Activated CD4-positive, alpha-beta T cell treated with anti-CD3 and anti-CD28 coated beads for 36 hours (primary cell): ENCODE measurements at regions of chr6 and their contacts with region 1.

Region 1: GRCh38 chr6:137155830-137156229 is 17.6 kb downstream of the IL22RA2 start:
- DNase-seq: peak; percentile 54
- ATAC-seq: peak; percentile 96
- H3K4me3 Mint-ChIP-seq: no peak overlapping the region
- H3K27ac Mint-ChIP-seq: peak overlapping the region; percentile 44
- H3K4me1 Mint-ChIP-seq: peaks cover 16% of the 10 kb centered on the region
- H3K27me3 Mint-ChIP-seq: peaks cover 21% of the 10 kb centered on the region

Region 2: GRCh38 chr6:137102851-137103492 is 52.9 kb before region 1 on chr6:
- CTCF ChIA-PET with region 1: interaction called, 3 read pairs
- POLR2A ChIA-PET with region 1: no interaction called
- intact Hi-C with region 1: loop called in 1 of 2 experiments (anchors 5 kb)
- DNase-seq: peak; percentile 31
- ATAC-seq: peak; percentile 85
- H3K4me3 Mint-ChIP-seq: no peak overlapping the region
- H3K27ac Mint-ChIP-seq: peak overlapping the region; percentile 11
- H3K4me1 Mint-ChIP-seq: peaks cover 13% of the 10 kb centered on the region
- H3K27me3 Mint-ChIP-seq: no peaks in the 10 kb centered on the region